ENCODE measurements at regions of chr15 and their contacts with region 1.

Region 1: DNA sequence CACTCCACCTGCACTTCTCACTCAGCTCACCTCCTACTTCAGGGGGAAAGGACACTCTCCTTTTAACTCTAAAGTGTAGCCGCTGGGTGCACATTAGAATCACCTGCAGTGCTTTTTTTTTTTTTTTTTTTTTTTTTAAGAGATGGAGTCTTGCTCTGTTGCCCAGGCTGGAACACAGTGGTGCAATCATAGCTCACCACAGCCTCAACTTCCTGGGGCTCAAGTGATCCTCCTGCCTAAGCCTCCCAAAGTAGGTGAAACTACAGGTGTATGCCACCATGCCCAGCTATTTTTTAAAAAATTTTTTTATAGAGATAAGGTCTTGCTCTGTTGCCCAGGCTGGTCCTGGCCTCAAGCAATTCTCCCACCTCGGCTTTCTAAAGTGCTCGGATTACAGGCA is 20.8 kb downstream of the GRAMD2A start:
- DNase-seq: no peak
- ATAC-seq: no peak
- H3K4me3 ChIP-seq: no peak overlapping the region
- H3K27ac ChIP-seq: no peak overlapping the region
- H3K4me1 ChIP-seq: no peaks in the 10 kb centered on the region; the same call in 1 of the 2 replicates
- H3K27me3 ChIP-seq: no peaks in the 10 kb centered on the region
- CTCF ChIP-seq: no peak
- EP300 ChIP-seq: no peak
- POLR2A ChIP-seq: no peak
- RAD21 ChIP-seq: no peak

Region 2: GRCh38 chr15:72237286-72238224 is 60.8 kb after region 1 on chr15:
- CTCF ChIA-PET with region 1: no interaction called
- POLR2A ChIA-PET with region 1: interaction called, 11 read pairs
- RAD21 ChIA-PET with region 1: no interaction called
- SMC1A ChIA-PET with region 1: no interaction called
- in situ Hi-C with region 1: no loop called
- intact Hi-C with region 1: no loop called
- DNase-seq: peak; percentile 51
- ATAC-seq: peak; percentile 96
- H3K4me3 ChIP-seq: peak overlapping the region; percentile 59; the same call in 1 of the 2 replicates
- H3K27ac ChIP-seq: peak overlapping the region; percentile 67
- H3K4me1 ChIP-seq: peaks cover 8% of the 10 kb centered on the region; the same call in 1 of the 2 replicates
- H3K27me3 ChIP-seq: no peaks in the 10 kb centered on the region
- CTCF ChIP-seq: no peak
- EP300 ChIP-seq: no peak
- POLR2A ChIP-seq: no peak
- RAD21 ChIP-seq: no peak

Measured in GM12878 (cell line).